Activated CD8-positive, alpha-beta T cell treated with anti-CD3 and anti-CD28 coated beads for 36 hours (primary cell): ENCODE measurements at regions of chr9 and their contacts with region 1.

Region 1: GRCh38 chr9:90914868-90915483 is 113.4 kb downstream of the SYK start:
- DNase-seq: peak; percentile 80
- ATAC-seq: peak; percentile 99
- H3K4me3 Mint-ChIP-seq: no peak overlapping the region
- H3K27ac Mint-ChIP-seq: no peak overlapping the region
- H3K4me1 Mint-ChIP-seq: no peaks in the 10 kb centered on the region
- H3K27me3 Mint-ChIP-seq: no peaks in the 10 kb centered on the region
- CTCF ChIP-seq: peak; percentile 90

Region 2: GRCh38 chr9:90933468-90933867 is 18.5 kb after region 1 on chr9:
- CTCF ChIA-PET with region 1: interaction called, 12 read pairs
- POLR2A ChIA-PET with region 1: no interaction called
- intact Hi-C with region 1: no loop called
- DNase-seq: no peak
- ATAC-seq: no peak
- H3K4me3 Mint-ChIP-seq: no peak overlapping the region
- H3K27ac Mint-ChIP-seq: no peak overlapping the region
- H3K4me1 Mint-ChIP-seq: peaks cover 10% of the 10 kb centered on the region
- H3K27me3 Mint-ChIP-seq: peaks cover 14% of the 10 kb centered on the region
- CTCF ChIP-seq: no peak

Region 3: GRCh38 chr9:91036826-91037510 is 122.0 kb after region 1 on chr9:
- CTCF ChIA-PET with region 1: interaction called, 14 read pairs
- POLR2A ChIA-PET with region 1: no interaction called
- intact Hi-C with region 1: loop called (anchors 5 kb)
- DNase-seq: peak; percentile 85
- ATAC-seq: peak; percentile 89
- H3K4me3 Mint-ChIP-seq: peak overlapping the region; percentile 37
- H3K27ac Mint-ChIP-seq: peak overlapping the region; percentile 69
- H3K4me1 Mint-ChIP-seq: peaks cover 52% of the 10 kb centered on the region
- H3K27me3 Mint-ChIP-seq: peaks cover under 1% of the 10 kb centered on the region
- CTCF ChIP-seq: peak; percentile 74

Region 4: DNA sequence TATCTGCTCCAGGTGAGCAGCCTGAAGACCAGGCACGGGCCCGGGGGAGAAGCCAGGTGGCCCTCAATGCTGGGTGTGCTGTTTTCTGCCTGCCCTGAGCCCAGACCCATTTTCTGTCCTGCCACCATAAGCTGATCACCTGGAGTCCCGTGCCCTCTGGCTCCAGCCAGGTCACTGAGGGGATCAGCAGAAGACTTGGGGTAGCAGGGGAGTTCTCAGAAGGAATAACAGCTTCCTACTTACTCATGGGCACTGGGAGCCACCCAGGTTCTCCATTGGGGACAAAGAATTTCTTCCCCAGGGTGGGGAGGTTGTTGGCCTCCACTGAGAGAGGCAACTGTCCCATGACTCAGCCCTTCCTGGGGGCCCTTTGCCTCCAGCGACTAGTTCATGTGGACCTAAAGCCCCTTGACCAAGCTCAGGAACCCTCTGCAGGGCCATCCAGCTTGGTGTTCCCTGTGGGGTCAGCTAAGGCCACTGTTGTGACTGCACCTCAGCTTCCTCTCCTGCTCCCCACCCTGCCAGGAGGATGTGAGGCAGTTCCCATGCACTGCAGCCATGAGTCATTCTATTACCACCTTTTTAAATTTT is 271.6 kb after region 1 on chr9:
- CTCF ChIA-PET with region 1: no interaction called
- POLR2A ChIA-PET with region 1: no interaction called
- intact Hi-C with region 1: no loop called
- DNase-seq: peak; percentile 57
- ATAC-seq: peak; percentile 78
- H3K4me3 Mint-ChIP-seq: no peak overlapping the region
- H3K27ac Mint-ChIP-seq: peak overlapping the region; percentile 80
- H3K4me1 Mint-ChIP-seq: peaks cover 30% of the 10 kb centered on the region
- H3K27me3 Mint-ChIP-seq: no peaks in the 10 kb centered on the region
- CTCF ChIP-seq: no peak

Region 5: GRCh38 chr9:91433180-91433579 is 518.2 kb after region 1 on chr9:
- CTCF ChIA-PET with region 1: interaction called, 60 read pairs
- POLR2A ChIA-PET with region 1: no interaction called
- intact Hi-C with region 1: no loop called
- DNase-seq: peak; percentile 26
- ATAC-seq: peak; percentile 87
- H3K4me3 Mint-ChIP-seq: no peak overlapping the region
- H3K27ac Mint-ChIP-seq: no peak overlapping the region
- H3K4me1 Mint-ChIP-seq: peaks cover 10% of the 10 kb centered on the region
- H3K27me3 Mint-ChIP-seq: peaks cover 19% of the 10 kb centered on the region
- CTCF ChIP-seq: peak; percentile 40

Region 6: DNA sequence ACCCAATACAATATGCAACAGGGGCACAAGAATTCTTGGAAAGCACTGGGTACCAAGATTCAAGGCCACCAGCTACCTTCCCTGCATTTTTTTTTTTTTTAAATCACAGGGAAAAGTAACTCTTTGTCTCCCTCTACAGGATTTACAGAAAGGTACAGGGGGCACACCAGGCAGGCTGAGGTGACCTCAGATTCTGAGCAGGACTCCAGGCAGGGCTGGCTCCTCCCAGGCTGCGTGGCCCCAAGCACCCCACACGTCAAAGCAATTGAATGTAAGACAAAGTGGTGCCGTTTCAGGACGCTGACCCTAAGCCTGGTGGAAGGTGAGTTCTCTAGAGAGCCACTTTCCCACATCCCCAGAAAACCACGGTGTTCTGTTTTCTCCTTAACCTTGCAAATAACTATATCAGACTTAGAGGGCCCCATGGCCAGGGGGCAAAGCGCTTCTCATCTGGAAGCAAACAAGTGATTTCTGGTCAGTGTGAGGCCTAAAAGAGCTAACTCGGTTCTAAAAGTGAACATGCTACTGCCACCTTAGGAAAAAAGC is 812.4 kb after region 1 on chr9:
- CTCF ChIA-PET with region 1: interaction called, 28 read pairs
- POLR2A ChIA-PET with region 1: no interaction called
- intact Hi-C with region 1: no loop called
- DNase-seq: peak; percentile 56
- ATAC-seq: peak; percentile 100
- H3K4me3 Mint-ChIP-seq: no peak overlapping the region
- H3K27ac Mint-ChIP-seq: no peak overlapping the region
- H3K4me1 Mint-ChIP-seq: no peaks in the 10 kb centered on the region
- H3K27me3 Mint-ChIP-seq: no peaks in the 10 kb centered on the region
- CTCF ChIP-seq: peak; percentile 85